Activated naive CD4-positive, alpha-beta T cell treated with anti-CD3 and anti-CD28 coated beads for 36 hours (primary cell): ENCODE measurements at regions of chr11 and their contacts with region 1.

Region 1: DNA sequence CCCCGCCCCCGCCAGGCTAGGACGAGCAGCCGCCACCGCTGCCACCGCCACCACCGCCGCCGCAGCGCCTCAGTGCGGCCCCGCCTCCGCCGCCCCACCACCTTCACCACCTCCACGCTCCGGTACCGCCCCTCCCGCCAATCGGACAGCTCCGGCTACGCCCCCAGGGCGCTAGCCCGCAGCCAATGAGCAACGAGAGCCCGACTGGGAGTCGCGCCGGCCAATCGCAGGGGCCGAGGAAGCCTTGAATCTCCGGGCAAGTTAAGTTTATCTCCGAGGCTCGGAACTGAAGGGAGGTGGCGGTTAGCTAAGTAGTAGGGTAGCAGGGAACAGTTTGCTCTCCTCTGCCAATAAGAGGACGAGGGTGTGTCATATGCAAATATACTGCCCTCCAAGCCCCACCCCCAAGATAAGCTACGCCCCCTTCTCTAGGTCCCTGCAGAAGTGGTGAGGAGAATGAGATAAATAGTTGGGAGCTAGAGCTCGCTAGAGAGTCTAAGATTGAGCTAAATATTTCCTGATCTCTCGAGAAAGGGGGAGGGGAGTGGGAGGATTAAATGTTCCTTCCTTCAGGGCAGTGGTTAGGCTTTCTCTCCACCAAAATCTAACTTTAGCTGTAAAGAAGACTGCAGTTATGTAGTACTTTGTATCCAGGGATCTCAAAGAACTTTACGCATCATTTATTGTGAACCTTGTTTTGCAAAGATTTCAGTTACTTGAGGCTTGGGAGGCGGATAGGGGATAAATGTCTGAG is at the start of gene SESN3:
- DNase-seq: peak; percentile 99
- H3K4me3 Mint-ChIP-seq: no peak within 1 kb of the TSS
- H3K27ac Mint-ChIP-seq: peak within 1 kb of the TSS; percentile 83
- H3K4me1 Mint-ChIP-seq: peaks cover 52% of the 10 kb centered on the region
- H3K27me3 Mint-ChIP-seq: no peaks in the 10 kb centered on the region
- total RNA-seq, gene SESN3: 17.5 to 18.1 TPM

Region 2: GRCh38 chr11:94815705-94816344 is 415.5 kb before region 1 on chr11:
- CTCF ChIA-PET with region 1: no interaction called
- intact Hi-C with region 1: no loop called
- DNase-seq: no peak
- H3K4me3 Mint-ChIP-seq: no peak overlapping the region
- H3K27ac Mint-ChIP-seq: no peak overlapping the region
- H3K4me1 Mint-ChIP-seq: no peaks in the 10 kb centered on the region
- H3K27me3 Mint-ChIP-seq: no peaks in the 10 kb centered on the region

Region 3: GRCh38 chr11:95084509-95084908 is 146.8 kb before region 1 on chr11:
- CTCF ChIA-PET with region 1: interaction called, 3 read pairs
- intact Hi-C with region 1: loop called (anchors 1 kb)
- DNase-seq: peak; percentile 84
- H3K4me3 Mint-ChIP-seq: no peak overlapping the region
- H3K27ac Mint-ChIP-seq: peak overlapping the region; percentile 69
- H3K4me1 Mint-ChIP-seq: peaks cover 42% of the 10 kb centered on the region
- H3K27me3 Mint-ChIP-seq: no peaks in the 10 kb centered on the region

Region 4: DNA sequence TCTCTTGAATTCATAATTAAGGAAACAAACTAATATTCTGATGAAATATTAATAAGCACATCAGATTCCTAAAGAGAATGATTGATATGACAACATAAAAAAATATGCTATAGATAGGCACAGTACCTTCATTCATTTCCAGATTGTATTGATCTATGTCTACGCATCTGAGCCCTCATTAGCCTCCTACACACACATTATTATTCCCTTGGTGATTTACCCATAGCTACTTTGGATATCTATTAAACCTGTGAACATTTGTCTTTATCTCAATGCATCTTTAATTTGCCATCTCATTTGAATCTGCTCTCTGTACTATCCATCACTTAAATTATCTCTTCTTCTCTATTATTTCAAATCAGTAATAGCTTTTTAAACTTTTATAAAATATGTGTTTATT is 18.7 kb before region 1 on chr11:
- CTCF ChIA-PET with region 1: interaction called, 5 read pairs
- intact Hi-C with region 1: loop called (anchors 2 kb)
- DNase-seq: no peak
- H3K4me3 Mint-ChIP-seq: no peak overlapping the region
- H3K27ac Mint-ChIP-seq: no peak overlapping the region
- H3K4me1 Mint-ChIP-seq: peaks cover 39% of the 10 kb centered on the region
- H3K27me3 Mint-ChIP-seq: no peaks in the 10 kb centered on the region

Region 5: DNA sequence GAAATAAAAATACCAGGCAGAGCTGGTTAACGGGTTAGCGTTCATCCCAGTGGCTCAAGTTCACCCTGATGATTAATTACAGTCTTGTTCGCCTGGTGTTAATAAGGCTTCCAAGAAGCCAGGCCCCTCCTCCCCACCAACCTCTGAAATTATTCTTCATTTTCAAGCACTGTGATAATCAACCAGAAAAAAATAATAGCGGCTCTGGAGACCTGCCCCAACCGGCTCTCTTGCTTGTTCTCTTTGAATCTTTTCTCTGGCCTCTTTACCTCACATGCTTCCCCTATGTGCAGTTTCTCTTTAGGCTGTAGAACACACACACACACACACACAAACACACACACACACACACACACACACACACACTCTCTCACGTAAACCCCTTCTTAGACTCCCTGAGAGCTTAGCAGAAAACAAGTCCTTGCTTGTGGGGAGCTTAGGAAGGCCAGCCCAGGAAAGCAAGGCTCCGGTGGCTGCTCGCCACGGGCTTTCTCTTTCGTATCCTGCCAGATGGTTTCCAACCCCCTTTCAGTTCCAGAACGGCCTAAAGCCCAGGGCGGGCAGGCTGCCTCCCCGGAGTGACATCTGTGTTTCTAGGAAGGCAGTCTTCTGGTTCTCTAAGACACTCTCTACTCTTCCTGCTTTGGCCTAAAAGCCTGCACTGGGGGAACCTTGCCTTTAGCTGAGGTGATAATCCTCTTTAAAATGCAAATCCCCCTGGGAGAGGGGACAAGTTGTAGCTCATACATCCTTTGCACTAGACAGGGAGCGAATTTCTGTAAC is 106.1 kb after region 1 on chr11:
- CTCF ChIA-PET with region 1: interaction called, 10 read pairs
- intact Hi-C with region 1: loop called (anchors 1 kb)
- DNase-seq: peak; percentile 69
- H3K4me3 Mint-ChIP-seq: no peak overlapping the region
- H3K27ac Mint-ChIP-seq: no peak overlapping the region
- H3K4me1 Mint-ChIP-seq: peaks cover 4% of the 10 kb centered on the region
- H3K27me3 Mint-ChIP-seq: no peaks in the 10 kb centered on the region

Region 6: GRCh38 chr11:95641495-95641894 is 410.2 kb after region 1 on chr11:
- CTCF ChIA-PET with region 1: no interaction called
- intact Hi-C with region 1: loop called (anchors 1 kb)
- DNase-seq: peak; percentile 52
- H3K4me3 Mint-ChIP-seq: no peak overlapping the region
- H3K27ac Mint-ChIP-seq: peak overlapping the region; percentile 55
- H3K4me1 Mint-ChIP-seq: peaks cover 22% of the 10 kb centered on the region
- H3K27me3 Mint-ChIP-seq: no peaks in the 10 kb centered on the region

Region 7: GRCh38 chr11:96012086-96012824 is 781.0 kb after region 1 on chr11:
- CTCF ChIA-PET with region 1: no interaction called
- intact Hi-C with region 1: loop called (anchors 10 kb)
- DNase-seq: peak; percentile 67
- H3K4me3 Mint-ChIP-seq: peak overlapping the region; percentile 52
- H3K27ac Mint-ChIP-seq: peak overlapping the region; percentile 72
- H3K4me1 Mint-ChIP-seq: peaks cover 69% of the 10 kb centered on the region
- H3K27me3 Mint-ChIP-seq: no peaks in the 10 kb centered on the region